H1 (cell line): ENCODE measurements at regions of chr3 and their contacts with region 1.

Region 1: GRCh38 chr3:127679285-127680145 is 6.8 kb downstream of the ABTB1 start:
- DNase-seq: peak in 1 of 2 experiments; percentile 82
- H3K4me3 ChIP-seq: no peak overlapping the region
- H3K27ac ChIP-seq: no peak overlapping the region
- H3K4me1 ChIP-seq: peaks cover 0 to 6% (median 4%) of the 10 kb centered on the region in 4 experiments; a peak in 4 of 7 replicates
- H3K27me3 ChIP-seq: no peaks in the 10 kb centered on the region
- CTCF ChIP-seq: peak in 2 of 3 experiments; percentile 65 to 73; a peak in 3 of 4 replicates
- EP300 ChIP-seq: no peak
- POLR2A ChIP-seq: no peak
- RAD21 ChIP-seq: peak; percentile 36 to 49; a peak in 3 of 4 replicates

Region 2: DNA sequence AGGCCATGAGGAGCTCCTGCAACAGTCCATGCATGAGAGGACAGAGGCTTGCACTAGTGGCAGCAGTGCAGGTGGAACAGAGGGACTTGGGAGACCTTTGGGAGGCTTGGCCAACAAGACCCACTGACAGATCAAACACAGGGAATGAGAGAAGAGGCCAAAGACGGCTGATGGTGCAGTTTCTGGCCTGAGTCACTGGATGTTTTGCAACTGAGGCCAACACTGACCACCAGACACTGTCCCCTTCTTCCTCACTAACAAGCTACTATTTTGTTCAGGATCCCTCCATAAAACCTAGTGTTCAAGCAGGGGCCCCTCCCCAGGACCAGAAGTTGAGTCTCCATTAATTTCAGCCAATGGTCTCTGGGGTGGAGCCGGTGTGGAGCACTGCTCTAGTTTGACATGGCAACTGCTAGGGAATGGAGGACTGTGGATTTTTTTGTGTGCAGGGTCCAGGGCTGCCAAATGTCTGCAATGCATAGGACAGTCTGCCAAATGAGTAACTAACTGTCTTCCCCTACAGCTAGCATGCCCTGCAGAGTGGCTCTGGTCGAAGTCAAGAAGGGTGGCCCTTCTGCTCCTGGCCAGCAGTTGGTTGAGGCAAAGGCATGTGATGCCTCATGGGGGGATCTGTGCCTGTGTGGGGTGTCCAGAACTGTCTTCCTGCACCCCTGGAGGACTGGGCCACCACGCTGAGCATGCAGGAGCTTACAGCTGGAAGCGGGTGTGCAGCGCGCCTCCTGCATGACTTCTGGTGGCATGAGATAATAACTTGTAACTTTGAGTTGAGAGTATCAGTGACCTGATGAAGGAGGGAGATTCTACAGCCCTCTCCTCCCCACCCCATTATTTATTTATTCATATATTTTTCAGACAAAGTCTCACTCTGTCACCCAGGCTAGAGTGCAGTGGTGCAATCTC is 93.8 kb before region 1 on chr3:
- CTCF ChIA-PET with region 1: interaction called, 11 read pairs
- POLR2A ChIA-PET with region 1: interaction called, 4 read pairs
- DNase-seq: no peak
- H3K4me3 ChIP-seq: no peak overlapping the region
- H3K27ac ChIP-seq: no peak overlapping the region
- H3K4me1 ChIP-seq: peaks cover 4 to 11% (median 6%) of the 10 kb centered on the region in 4 experiments
- H3K27me3 ChIP-seq: 0 out of 7 replicates have a peak, but pooled peaks cover 0 to 6% (median 0%) of the 10 kb centered on the region in 4 experiments
- CTCF ChIP-seq: no peak
- EP300 ChIP-seq: no peak
- POLR2A ChIP-seq: no peak
- RAD21 ChIP-seq: no peak

Region 3: DNA sequence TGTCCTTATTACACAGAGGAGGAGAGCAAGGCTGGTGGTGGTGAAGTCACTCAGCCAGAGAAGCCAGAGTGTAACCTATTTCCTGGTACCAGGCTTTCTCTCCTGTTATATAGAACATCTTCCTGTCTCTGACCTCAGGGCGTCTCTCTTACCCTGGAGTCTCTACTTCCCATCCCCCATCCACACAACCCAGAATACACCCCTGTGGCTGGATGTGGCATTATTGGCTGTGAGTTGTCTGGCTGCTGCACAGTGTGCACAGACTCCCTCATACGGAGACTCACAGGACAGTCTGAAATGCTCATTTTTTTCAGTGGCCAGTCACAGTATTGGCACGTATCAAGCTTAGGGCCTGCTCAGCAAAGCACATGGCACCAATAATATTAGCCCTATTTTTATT is 42.0 kb before region 1 on chr3:
- CTCF ChIA-PET with region 1: interaction called, 11 read pairs
- POLR2A ChIA-PET with region 1: no interaction called
- DNase-seq: no peak
- H3K4me3 ChIP-seq: no peak overlapping the region
- H3K27ac ChIP-seq: no peak overlapping the region
- H3K4me1 ChIP-seq: no peaks in the 10 kb centered on the region; a peak in 1 of 7 replicates
- H3K27me3 ChIP-seq: no peaks in the 10 kb centered on the region
- CTCF ChIP-seq: no peak
- EP300 ChIP-seq: no peak
- POLR2A ChIP-seq: no peak
- RAD21 ChIP-seq: no peak

Region 4: GRCh38 chr3:127652231-127652995 is 27.1 kb before region 1 on chr3:
- CTCF ChIA-PET with region 1: interaction called, 104 read pairs
- POLR2A ChIA-PET with region 1: interaction called, 4 read pairs
- DNase-seq: peak in 1 of 2 experiments; percentile 72
- H3K4me3 ChIP-seq: no peak overlapping the region
- H3K27ac ChIP-seq: no peak overlapping the region
- H3K4me1 ChIP-seq: no peaks in the 10 kb centered on the region
- H3K27me3 ChIP-seq: no peaks in the 10 kb centered on the region
- CTCF ChIP-seq: peak; percentile 68 to 91 (median 88)
- EP300 ChIP-seq: no peak
- POLR2A ChIP-seq: no peak
- RAD21 ChIP-seq: peak; percentile 89 to 93

Region 5: DNA sequence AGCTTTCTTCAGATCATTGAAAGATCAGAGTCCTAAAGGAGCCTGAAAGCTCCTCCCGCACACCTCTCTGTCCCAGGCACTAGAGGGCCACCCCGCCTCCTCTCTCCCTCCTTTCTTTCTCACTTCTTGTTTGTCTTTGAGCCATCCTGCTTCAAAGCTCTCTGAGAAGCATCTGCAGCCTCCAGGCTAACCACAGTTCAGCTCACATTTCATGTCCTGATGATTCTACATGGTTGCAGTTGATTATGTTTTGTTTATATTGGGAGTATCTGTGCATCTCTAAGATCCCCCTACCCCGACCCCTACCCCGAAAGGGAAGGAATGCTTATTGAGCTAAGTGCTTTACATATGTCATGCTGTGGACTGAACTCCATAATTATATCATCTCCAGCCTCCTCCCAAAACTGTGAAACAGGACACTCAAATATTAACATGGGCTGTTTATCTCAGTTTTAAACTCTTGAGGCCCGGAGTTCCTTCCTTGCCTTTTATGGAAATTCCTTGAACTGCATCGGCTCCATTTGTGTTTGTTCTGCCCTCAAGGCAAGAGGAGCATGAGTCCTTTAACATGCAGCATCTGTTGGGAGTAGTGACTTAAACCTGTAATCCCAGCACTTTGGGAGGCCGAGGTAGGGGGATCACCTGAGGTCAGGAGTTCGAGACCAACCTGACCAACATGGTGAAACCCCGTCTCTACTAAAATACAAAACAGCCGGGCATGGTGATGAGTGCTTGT is 111.9 kb after region 1 on chr3:
- CTCF ChIA-PET with region 1: interaction called, 10 read pairs
- POLR2A ChIA-PET with region 1: no interaction called
- DNase-seq: no peak
- H3K4me3 ChIP-seq: no peak overlapping the region
- H3K27ac ChIP-seq: no peak overlapping the region
- H3K4me1 ChIP-seq: no peaks in the 10 kb centered on the region; a peak in 1 of 7 replicates
- H3K27me3 ChIP-seq: no peaks in the 10 kb centered on the region
- CTCF ChIP-seq: peak; percentile 37 to 49 (median 48)
- EP300 ChIP-seq: no peak
- POLR2A ChIP-seq: no peak
- RAD21 ChIP-seq: peak; percentile 48 to 61

Region 6: DNA sequence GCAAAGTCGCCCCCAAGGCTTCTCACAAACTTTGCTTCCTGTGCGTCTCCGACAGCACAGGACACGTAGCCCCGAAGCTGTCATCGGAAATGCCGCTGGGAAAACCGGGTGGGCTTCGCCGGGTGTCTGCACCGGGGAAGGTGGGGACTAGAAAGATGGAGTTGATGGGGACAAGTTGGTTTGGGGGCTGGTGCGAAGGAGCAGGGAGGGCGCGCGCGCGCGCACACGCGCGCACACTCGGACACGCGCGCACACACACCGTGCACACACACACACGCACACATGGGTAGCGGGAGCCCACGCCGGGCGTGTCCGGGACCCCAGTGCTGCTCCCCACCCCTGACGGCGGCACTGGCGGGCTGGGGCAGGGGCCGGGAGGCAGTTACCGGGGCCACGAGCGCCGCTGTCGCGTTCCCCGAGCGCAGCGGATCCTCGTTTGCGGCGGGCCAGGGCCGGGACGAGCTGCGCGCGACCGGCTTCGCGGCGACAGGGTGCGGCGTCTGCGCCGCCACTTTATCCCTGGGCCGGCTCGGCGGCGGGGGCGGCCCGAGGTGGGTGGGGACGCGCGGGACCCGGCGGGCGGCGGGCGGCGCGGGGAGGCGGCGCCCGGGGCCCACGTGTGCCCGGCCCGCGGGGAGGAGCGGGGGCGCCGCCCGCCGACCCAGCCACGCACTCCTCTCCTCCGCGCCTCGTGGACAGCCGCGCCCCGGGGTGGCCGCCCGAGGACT is 143.3 kb after region 1 on chr3:
- CTCF ChIA-PET with region 1: interaction called, 16 read pairs
- POLR2A ChIA-PET with region 1: interaction called, 3 read pairs
- DNase-seq: peak in 1 of 2 experiments; percentile 60
- H3K4me3 ChIP-seq: peak overlapping the region; percentile 56 to 75 (median 64)
- H3K27ac ChIP-seq: no peak overlapping the region
- H3K4me1 ChIP-seq: peaks cover 0 to 10% (median 1%) of the 10 kb centered on the region in 4 experiments; a peak in 6 of 7 replicates
- H3K27me3 ChIP-seq: peaks cover 11 to 31% (median 25%) of the 10 kb centered on the region in 4 experiments; a peak in 6 of 7 replicates
- CTCF ChIP-seq: no peak
- EP300 ChIP-seq: no peak
- POLR2A ChIP-seq: no peak
- RAD21 ChIP-seq: no peak